PC-9 (cell line): ENCODE measurements at regions of chr1 and their contacts with region 1.

Region 1: GRCh38 chr1:167721617-167722151 is at the start of gene MPZL1:
- DNase-seq: peak; percentile 77 to 94
- H3K4me3 ChIP-seq: peak within 1 kb of the TSS; percentile 74
- H3K27ac ChIP-seq: peak within 1 kb of the TSS; percentile 46
- H3K4me1 ChIP-seq: peaks cover 32% of the 10 kb centered on the region
- H3K27me3 ChIP-seq: no peaks in the 10 kb centered on the region
- CTCF ChIP-seq: no peak
- total RNA-seq, gene MPZL1: 67.8 and 80.3 TPM in 2 replicates

Region 2: DNA sequence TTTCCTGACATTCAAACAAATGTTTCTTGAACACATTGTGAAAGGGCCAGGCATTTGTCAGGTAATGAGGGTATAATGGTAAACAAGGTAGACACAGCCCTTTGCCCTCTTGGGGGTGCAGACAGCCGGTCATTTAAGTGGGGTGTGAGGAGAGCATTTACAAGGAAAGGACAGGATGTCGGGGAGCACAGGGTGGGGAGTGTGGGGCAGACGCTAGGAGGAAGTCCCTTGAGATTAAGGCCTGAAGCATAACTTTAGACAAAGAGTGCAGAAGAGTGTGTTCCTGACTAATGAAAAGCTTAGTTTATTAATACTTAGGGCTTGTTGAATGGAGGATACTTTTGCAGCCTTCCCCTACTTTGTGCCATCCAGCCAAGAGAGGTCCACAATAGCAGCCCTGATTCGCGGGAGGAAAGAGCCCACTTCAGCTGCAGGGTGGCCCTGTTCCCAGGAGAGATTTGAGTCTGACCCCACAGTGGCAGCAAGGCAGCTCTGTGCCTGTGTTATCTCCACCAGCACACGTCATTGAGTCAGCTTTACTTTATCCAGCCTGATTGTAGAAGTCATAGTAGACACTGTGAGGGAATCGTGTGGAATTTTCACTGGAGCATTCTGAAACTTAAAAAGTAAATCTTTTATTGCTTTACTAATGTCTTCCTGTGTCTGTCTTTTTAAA is 35.2 kb after region 1 on chr1:
- CTCF ChIA-PET with region 1: no interaction called
- POLR2A ChIA-PET with region 1: no interaction called
- intact Hi-C with region 1: loop called (anchors 5 kb)
- DNase-seq: no peak
- H3K4me3 ChIP-seq: no peak overlapping the region
- H3K27ac ChIP-seq: no peak overlapping the region
- H3K4me1 ChIP-seq: no peaks in the 10 kb centered on the region
- H3K27me3 ChIP-seq: no peaks in the 10 kb centered on the region
- CTCF ChIP-seq: no peak

Region 3: DNA sequence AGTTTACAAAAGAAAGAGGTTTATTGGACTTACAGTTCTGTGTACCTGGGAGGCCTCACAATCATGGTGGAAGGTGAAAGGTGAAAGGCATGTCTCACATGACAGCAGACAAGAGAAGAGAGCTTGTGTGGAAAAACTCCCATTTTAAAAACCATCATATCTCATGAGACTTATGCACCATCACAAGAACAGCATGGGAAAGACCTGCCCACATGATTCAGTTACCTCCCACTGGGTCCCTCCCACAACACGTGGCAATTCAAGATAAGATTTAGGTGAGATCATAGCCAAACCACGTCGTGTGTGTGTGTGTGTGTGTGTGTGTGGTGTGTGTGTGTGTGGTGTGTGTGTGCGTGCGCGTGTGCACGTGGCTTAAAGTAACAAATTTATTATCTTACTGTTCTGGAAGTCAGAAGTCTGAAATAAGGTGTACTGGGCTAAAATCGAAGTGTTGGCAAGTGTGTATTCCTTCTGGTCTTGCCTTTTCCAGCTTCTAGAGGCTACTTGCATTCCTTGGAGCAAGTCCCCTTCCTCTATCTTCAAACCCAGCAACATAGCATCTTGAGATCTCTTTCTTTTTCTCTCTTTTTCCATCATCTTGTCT is 263.3 kb after region 1 on chr1:
- CTCF ChIA-PET with region 1: no interaction called
- POLR2A ChIA-PET with region 1: no interaction called
- intact Hi-C with region 1: loop called (anchors 10 kb)
- DNase-seq: no peak
- H3K4me3 ChIP-seq: no peak overlapping the region
- H3K27ac ChIP-seq: no peak overlapping the region
- H3K4me1 ChIP-seq: peaks cover 14% of the 10 kb centered on the region; the same call in 1 of the 2 replicates
- H3K27me3 ChIP-seq: no peaks in the 10 kb centered on the region
- CTCF ChIP-seq: no peak